RWPE1 (cell line): ENCODE measurements at regions of chr3 and their contacts with region 1.

Region 1: DNA sequence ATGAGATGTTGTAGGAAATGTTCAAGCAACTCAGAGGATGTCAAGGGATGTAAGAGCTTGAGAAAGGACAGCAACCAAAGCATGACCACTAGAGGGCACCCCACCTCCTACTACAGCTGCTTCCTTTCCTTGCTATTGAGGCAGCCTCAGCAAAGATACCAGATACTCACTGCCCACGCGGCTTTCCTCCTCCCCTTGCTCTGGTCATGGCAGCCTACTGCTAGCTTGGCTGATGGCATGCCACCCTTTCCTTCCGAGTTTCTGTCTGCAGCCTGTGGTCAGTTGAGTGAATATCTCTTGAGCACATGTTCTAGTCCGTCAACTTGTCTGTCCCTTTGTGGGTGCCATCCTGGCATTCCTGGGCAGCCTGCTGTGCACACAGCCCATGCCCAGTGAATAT is 4.4 kb upstream of the CXCR6 start:
- DNase-seq: peak; percentile 54
- H3K27ac ChIP-seq: no peak overlapping the region
- CTCF ChIP-seq: peak; percentile 81

Region 2: GRCh38 chr3:45958321-45958791 is 19.5 kb after region 1 on chr3:
- CTCF ChIA-PET with region 1: no interaction called
- POLR2A ChIA-PET with region 1: no interaction called
- DNase-seq: no peak
- H3K27ac ChIP-seq: no peak overlapping the region
- CTCF ChIP-seq: no peak

Region 3: GRCh38 chr3:46078712-46079400 is 140.0 kb after region 1 on chr3:
- CTCF ChIA-PET with region 1: interaction called, 34 read pairs
- POLR2A ChIA-PET with region 1: no interaction called
- DNase-seq: peak; percentile 67
- H3K27ac ChIP-seq: no peak overlapping the region
- CTCF ChIP-seq: peak; percentile 97